ENCODE measurements at regions of chr12 and their contacts with region 1.

Region 1: DNA sequence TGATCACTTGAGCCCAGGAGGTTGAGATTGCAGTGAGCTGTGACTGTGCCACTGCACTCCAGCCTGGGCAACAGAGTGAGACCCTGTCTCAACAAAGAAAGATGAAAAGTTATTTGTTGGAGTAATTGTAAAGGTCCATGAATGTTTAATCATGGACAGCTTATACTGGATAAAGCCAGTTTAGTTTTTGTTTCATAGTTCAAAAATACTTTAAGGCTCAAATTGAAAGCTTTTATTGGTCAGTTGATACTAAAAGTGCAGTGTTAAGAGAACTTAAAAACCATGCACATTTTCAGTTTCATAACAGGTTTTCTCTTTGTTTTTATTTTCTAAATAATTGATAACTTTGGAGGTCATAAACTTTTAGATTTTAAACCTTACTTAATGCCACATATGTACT is 108.4 kb downstream of the MON2 start:
- DNase-seq: peak; percentile 9
- CTCF ChIP-seq: no peak

Region 2: GRCh38 chr12:62537551-62537950 is 37.5 kb before region 1 on chr12:
- CTCF ChIA-PET with region 1: no interaction called
- POLR2A ChIA-PET with region 1: no interaction called
- DNase-seq: no peak
- CTCF ChIP-seq: no peak

Region 3: DNA sequence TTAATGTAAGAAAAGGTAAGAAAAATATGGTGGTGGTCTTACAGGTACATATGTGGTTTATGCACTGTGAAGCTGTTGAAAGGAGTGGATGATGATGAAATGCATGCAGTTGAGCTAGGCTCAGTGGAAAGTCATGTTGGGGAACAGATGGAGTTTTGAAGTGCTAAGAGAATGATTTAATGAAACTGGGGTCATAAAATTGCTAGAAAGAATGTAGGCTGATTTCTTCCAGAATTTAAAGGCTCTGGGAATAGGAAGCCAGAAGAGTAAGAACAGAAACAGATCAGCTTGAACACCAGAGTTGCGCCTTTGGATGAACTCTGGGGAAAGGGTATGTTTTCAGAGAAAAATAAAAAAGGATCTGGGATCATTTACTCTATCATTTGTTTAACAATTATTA is 38.0 kb after region 1 on chr12:
- CTCF ChIA-PET with region 1: no interaction called
- POLR2A ChIA-PET with region 1: no interaction called
- DNase-seq: no peak
- CTCF ChIP-seq: no peak

Region 4: GRCh38 chr12:62793256-62794217 is 218.5 kb after region 1 on chr12:
- CTCF ChIA-PET with region 1: interaction called, 157 read pairs
- POLR2A ChIA-PET with region 1: no interaction called
- DNase-seq: peak; percentile 68
- CTCF ChIP-seq: peak; percentile 89

Measured in GM10248 (cell line).